Transverse colon (tissue), 4 donors: ENCODE measurements at regions of chr15 and their contacts with region 1.

Region 1: DNA sequence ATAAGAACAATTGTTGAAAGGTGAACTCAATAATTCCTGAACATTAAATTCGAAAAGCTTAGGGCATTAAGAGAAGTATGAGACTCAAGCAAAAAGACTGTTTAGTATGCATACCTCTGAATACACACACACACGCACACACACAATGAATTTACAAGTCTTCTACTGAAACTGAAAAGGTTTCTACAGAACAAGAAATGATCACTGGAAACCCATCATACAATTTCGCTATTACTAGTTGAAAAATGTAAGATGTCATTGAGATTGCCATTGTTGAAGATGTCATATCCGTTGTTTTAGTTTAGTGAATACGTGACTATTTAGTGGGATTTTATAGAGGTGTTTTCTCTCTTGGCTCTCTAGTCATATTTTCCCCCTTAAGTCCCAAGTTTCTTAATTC is 106.8 kb downstream of the FOXB1 start:
- DNase-seq: no peak
- H3K4me3 ChIP-seq: no peak overlapping the region
- H3K27ac ChIP-seq: no peak overlapping the region
- H3K4me1 ChIP-seq: no peaks in the 10 kb centered on the region
- H3K27me3 ChIP-seq: peaks cover 6% of the 10 kb centered on the region
- CTCF ChIP-seq: no peak
- EP300 ChIP-seq: no peak
- POLR2A ChIP-seq: no peak

Region 2: DNA sequence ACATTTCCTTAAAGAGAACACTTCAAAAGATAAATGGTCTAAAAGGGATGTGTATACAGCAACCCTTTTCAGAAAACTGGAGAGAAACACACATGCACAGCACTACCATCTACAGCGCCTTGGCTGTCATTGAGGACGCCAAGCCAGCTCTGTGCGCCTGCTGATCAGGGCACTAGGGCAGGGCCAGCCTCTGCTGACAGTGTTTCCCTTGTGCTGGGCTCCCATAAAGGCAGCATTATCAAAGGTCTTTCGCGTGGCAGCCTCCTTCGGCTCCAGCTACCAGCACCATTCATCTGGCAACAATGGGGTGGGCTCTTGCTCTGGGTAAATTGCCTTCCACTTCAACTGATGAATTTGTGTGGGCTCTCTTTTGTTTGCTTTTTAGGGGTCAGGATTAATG is 850.8 kb before region 1 on chr15:
- in situ Hi-C with region 1: no loop called
- intact Hi-C with region 1: loop called (anchors 5 kb)
- DNase-seq: peak; percentile 72
- H3K4me3 ChIP-seq: no peak overlapping the region
- H3K27ac ChIP-seq: peak overlapping the region; percentile 30 to 64 (median 56)
- H3K4me1 ChIP-seq: peaks cover 9 to 39% (median 27%) of the 10 kb centered on the region in 4 donors
- H3K27me3 ChIP-seq: no peaks in the 10 kb centered on the region
- CTCF ChIP-seq: no peak
- EP300 ChIP-seq: no peak
- POLR2A ChIP-seq: no peak

Region 3: DNA sequence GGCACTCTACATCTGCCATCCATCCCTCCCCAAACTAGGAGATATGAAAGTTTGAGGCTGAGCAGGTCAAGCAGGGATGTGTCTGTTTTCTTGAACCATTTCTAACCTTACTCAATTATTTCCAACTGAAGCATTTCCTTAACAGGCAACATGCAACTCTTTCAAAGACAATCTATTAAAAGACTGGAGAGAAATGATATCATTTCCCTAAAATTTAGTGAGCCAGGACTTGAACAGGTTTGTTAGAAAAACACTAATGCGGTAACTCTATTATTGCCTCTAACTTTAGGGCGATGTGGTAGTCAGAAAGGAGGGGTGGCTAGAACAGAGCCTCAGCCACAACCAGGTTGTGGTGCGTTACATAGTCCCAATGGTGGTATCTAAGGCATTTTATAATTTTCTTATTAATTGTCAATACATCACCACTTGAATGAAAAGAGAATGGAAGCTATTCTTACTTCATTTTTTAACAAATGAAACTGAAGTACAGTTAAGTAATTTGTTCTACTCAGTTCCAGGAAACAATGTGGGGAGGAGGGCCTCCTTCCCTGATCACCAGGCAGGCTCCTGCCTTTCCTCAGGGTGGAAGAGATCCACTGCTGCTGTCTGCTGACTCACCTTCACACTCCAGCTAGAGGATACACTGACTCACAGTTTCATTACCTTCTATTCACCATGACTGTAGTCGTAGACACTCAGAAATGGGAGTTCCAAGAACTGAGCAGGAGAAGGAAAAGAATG is 761.1 kb before region 1 on chr15:
- in situ Hi-C with region 1: no loop called
- intact Hi-C with region 1: no loop called
- DNase-seq: peak; percentile 46
- H3K4me3 ChIP-seq: no peak overlapping the region
- H3K27ac ChIP-seq: peak overlapping the region; percentile 12 to 64 (median 54)
- H3K4me1 ChIP-seq: peaks cover 0 to 41% (median 10%) of the 10 kb centered on the region in 4 donors
- H3K27me3 ChIP-seq: no peaks in the 10 kb centered on the region
- CTCF ChIP-seq: no peak
- EP300 ChIP-seq: no peak
- POLR2A ChIP-seq: no peak

Region 4: DNA sequence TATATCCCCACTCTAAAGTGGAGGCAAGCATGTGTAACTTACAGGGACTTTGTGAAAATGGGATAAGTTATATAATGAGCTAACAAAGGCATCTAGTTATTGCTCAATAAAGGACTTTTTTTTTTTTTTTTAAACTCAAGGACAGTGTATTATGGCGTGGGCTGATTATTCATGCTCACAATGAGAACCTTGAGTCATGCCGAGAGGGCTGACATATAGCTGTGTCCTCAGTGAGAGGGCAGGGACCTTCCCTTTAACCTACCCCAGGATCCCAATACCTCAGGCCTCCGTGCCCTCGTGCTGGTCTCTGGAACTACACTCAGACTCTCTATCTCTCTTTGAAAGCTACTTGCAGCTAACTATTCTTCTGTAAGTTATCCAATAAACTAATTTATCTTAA is 687.9 kb after region 1 on chr15:
- in situ Hi-C with region 1: no loop called
- intact Hi-C with region 1: no loop called
- DNase-seq: no peak
- H3K4me3 ChIP-seq: no peak overlapping the region
- H3K27ac ChIP-seq: peak overlapping the region in 1 of 4 donors; percentile 16
- H3K4me1 ChIP-seq: no peaks in the 10 kb centered on the region
- H3K27me3 ChIP-seq: no peaks in the 10 kb centered on the region
- CTCF ChIP-seq: no peak
- EP300 ChIP-seq: no peak
- POLR2A ChIP-seq: no peak